ENCODE measurements at regions of chr6 and their contacts with region 1.

Region 1: GRCh38 chr6:36885461-36886401 is at the start of gene C6orf89:
- DNase-seq: peak; percentile 92 to 99 (median 97)
- ATAC-seq: peak; percentile 98
- H3K4me3 ChIP-seq: peak within 1 kb of the TSS; percentile 79
- H3K4me3 Mint-ChIP-seq: peak within 1 kb of the TSS; percentile 82
- H3K27ac ChIP-seq: peak within 1 kb of the TSS; percentile 73 to 83
- H3K27ac Mint-ChIP-seq: peak within 1 kb of the TSS; percentile 90
- H3K4me1 ChIP-seq: peaks cover 19% of the 10 kb centered on the region
- H3K4me1 Mint-ChIP-seq: peaks cover 41% of the 10 kb centered on the region
- H3K27me3 ChIP-seq: no peaks in the 10 kb centered on the region
- H3K27me3 Mint-ChIP-seq: no peaks in the 10 kb centered on the region
- CTCF ChIP-seq: peak; percentile 79
- total RNA-seq, gene C6orf89: 23.7 to 24.0 TPM

Region 2: GRCh38 chr6:35920793-35921732 is 964.7 kb before region 1 on chr6 and contains the start of gene SRPK1:
- CTCF ChIA-PET with region 1: no interaction called
- POLR2A ChIA-PET with region 1: no interaction called
- intact Hi-C with region 1: no loop called
- DNase-seq: peak; percentile 71 to 92 (median 81)
- ATAC-seq: peak; percentile 75
- H3K4me3 ChIP-seq: peak within 1 kb of the TSS; percentile 82
- H3K4me3 Mint-ChIP-seq: peak within 1 kb of the TSS; percentile 96
- H3K27ac ChIP-seq: peak within 1 kb of the TSS; percentile 2 to 59
- H3K27ac Mint-ChIP-seq: peak within 1 kb of the TSS; percentile 80
- H3K4me1 ChIP-seq: peaks cover 11% of the 10 kb centered on the region
- H3K4me1 Mint-ChIP-seq: peaks cover 44% of the 10 kb centered on the region
- H3K27me3 ChIP-seq: no peaks in the 10 kb centered on the region
- H3K27me3 Mint-ChIP-seq: no peaks in the 10 kb centered on the region
- CTCF ChIP-seq: no peak
- total RNA-seq, gene SRPK1: 23.0 to 29.1 TPM

Region 3: GRCh38 chr6:36912586-36912985 is 26.9 kb after region 1 on chr6:
- CTCF ChIA-PET with region 1: interaction called, 23 read pairs
- POLR2A ChIA-PET with region 1: interaction called, 3 read pairs
- intact Hi-C with region 1: loop called in 1 of 2 experiments (anchors 1 kb)
- DNase-seq: peak; percentile 19 to 89 (median 49)
- ATAC-seq: peak; percentile 92
- H3K4me3 ChIP-seq: peak overlapping the region; percentile 23
- H3K4me3 Mint-ChIP-seq: peak overlapping the region; percentile 64
- H3K27ac ChIP-seq: peak overlapping the region; percentile 32 to 50
- H3K27ac Mint-ChIP-seq: peak overlapping the region; percentile 82
- H3K4me1 ChIP-seq: peaks cover 38% of the 10 kb centered on the region
- H3K4me1 Mint-ChIP-seq: peaks cover 36% of the 10 kb centered on the region
- H3K27me3 ChIP-seq: no peaks in the 10 kb centered on the region
- H3K27me3 Mint-ChIP-seq: no peaks in the 10 kb centered on the region
- CTCF ChIP-seq: no peak

Region 4: DNA sequence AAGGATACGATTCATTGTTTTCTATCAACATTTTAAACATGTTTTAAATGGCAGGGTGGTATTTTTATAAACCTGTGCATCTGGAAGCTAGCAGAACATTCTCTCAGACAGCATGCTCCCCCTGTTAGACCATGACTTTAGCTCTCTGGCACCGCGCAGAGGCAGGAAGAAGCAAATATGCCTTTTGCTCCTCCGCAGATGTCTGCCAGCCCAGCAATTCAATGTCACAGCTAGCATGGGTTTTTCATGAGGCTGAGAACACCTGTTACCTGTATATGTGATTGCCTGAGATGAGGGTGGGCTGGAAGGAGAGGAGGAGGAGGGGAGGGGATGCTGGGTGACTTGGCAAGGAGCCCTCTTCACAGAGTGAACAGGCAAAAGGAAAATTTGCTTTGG is 93.6 kb after region 1 on chr6:
- CTCF ChIA-PET with region 1: interaction called, 8 read pairs
- POLR2A ChIA-PET with region 1: interaction called, 6 read pairs
- intact Hi-C with region 1: loop called (anchors 1 to 2 kb)
- DNase-seq: peak in 10 of 14 experiments; percentile 19 to 68 (median 42)
- ATAC-seq: peak; percentile 90
- H3K4me3 ChIP-seq: no peak overlapping the region
- H3K4me3 Mint-ChIP-seq: peak overlapping the region; percentile 79
- H3K27ac ChIP-seq: no peak overlapping the region
- H3K27ac Mint-ChIP-seq: peak overlapping the region; percentile 85
- H3K4me1 ChIP-seq: peaks cover 46% of the 10 kb centered on the region
- H3K4me1 Mint-ChIP-seq: peaks cover 32% of the 10 kb centered on the region
- H3K27me3 ChIP-seq: no peaks in the 10 kb centered on the region
- H3K27me3 Mint-ChIP-seq: no peaks in the 10 kb centered on the region
- CTCF ChIP-seq: peak; percentile 58

Region 5: GRCh38 chr6:37169496-37170272 is 284.0 kb after region 1 on chr6 and contains the start of gene PIM1:
- CTCF ChIA-PET with region 1: interaction called, 15 read pairs
- POLR2A ChIA-PET with region 1: interaction called, 4 read pairs
- intact Hi-C with region 1: loop called (anchors 1 to 5 kb)
- DNase-seq: peak; percentile 98 to 100 (median 100)
- ATAC-seq: peak; percentile 77
- H3K4me3 ChIP-seq: peak within 1 kb of the TSS; percentile 93
- H3K4me3 Mint-ChIP-seq: peak within 1 kb of the TSS; percentile 95
- H3K27ac ChIP-seq: peak within 1 kb of the TSS; percentile 57 to 77
- H3K27ac Mint-ChIP-seq: peak within 1 kb of the TSS; percentile 95
- H3K4me1 ChIP-seq: peaks cover 36% of the 10 kb centered on the region
- H3K4me1 Mint-ChIP-seq: peaks cover 44% of the 10 kb centered on the region
- H3K27me3 ChIP-seq: no peaks in the 10 kb centered on the region
- H3K27me3 Mint-ChIP-seq: no peaks in the 10 kb centered on the region
- CTCF ChIP-seq: no peak
- total RNA-seq, gene PIM1: 175 to 183 TPM

Region 6: GRCh38 chr6:37257634-37258404 is 372.1 kb after region 1 on chr6 and contains the starts of genes TBC1D22B and TMEM217:
- CTCF ChIA-PET with region 1: no interaction called
- POLR2A ChIA-PET with region 1: no interaction called
- intact Hi-C with region 1: loop called in 1 of 2 experiments (anchors 5 kb)
- DNase-seq: peak; percentile 90 to 97 (median 94)
- ATAC-seq: peak; percentile 99
- H3K4me3 ChIP-seq: peak within 1 kb of the TSS; percentile 82
- H3K4me3 Mint-ChIP-seq: peak within 1 kb of the TSS; percentile 84
- H3K27ac ChIP-seq: peak within 1 kb of the TSS; percentile 86 to 92
- H3K27ac Mint-ChIP-seq: peak within 1 kb of the TSS; percentile 73
- H3K4me1 ChIP-seq: peaks cover 21% of the 10 kb centered on the region
- H3K4me1 Mint-ChIP-seq: peaks cover 46% of the 10 kb centered on the region
- H3K27me3 ChIP-seq: no peaks in the 10 kb centered on the region
- H3K27me3 Mint-ChIP-seq: no peaks in the 10 kb centered on the region
- CTCF ChIP-seq: no peak
- total RNA-seq, gene TBC1D22B: 5.9 to 6.6 TPM
- total RNA-seq, gene TMEM217: 0.41 to 0.47 TPM